ENCODE measurements at regions of chr15 and their contacts with region 1.

Region 1: GRCh38 chr15:72783563-72784237 is at the start of gene ADPGK:
- DNase-seq: peak; percentile 93
- ATAC-seq: peak; percentile 82
- H3K4me3 Mint-ChIP-seq: peak within 1 kb of the TSS; percentile 93
- H3K27ac Mint-ChIP-seq: peak within 1 kb of the TSS; percentile 94
- H3K4me1 Mint-ChIP-seq: peaks cover 78% of the 10 kb centered on the region
- H3K27me3 Mint-ChIP-seq: no peaks in the 10 kb centered on the region
- total RNA-seq, gene ADPGK: 67.8 to 76.5 TPM

Region 2: GRCh38 chr15:72793766-72794660 is 10.3 kb after region 1 on chr15:
- CTCF ChIA-PET with region 1: interaction called, 21 read pairs
- DNase-seq: no peak
- ATAC-seq: no peak
- H3K4me3 Mint-ChIP-seq: no peak overlapping the region
- H3K27ac Mint-ChIP-seq: no peak overlapping the region
- H3K4me1 Mint-ChIP-seq: peaks cover 31% of the 10 kb centered on the region
- H3K27me3 Mint-ChIP-seq: peaks cover 7% of the 10 kb centered on the region

Region 3: DNA sequence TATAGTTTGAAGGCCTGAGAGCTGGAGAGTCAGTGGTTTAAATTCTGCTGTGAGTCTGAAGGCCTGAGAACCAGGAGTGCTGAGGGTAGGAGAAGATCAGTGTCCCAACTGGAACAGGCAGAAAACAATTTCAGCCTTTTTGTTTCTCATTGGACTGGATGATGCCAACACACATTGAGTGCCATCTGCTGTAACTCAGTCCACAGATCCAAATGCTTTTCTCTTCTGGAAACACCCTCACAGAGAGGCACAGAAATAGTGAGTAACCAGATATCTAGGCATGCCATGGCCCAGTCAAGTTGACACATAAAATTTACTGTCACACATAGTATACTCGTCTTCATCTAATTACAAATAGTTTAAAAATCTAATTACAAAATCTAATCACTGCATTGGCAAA is 369.3 kb after region 1 on chr15:
- CTCF ChIA-PET with region 1: no interaction called
- DNase-seq: no peak
- ATAC-seq: no peak
- H3K4me3 Mint-ChIP-seq: no peak overlapping the region
- H3K27ac Mint-ChIP-seq: no peak overlapping the region
- H3K4me1 Mint-ChIP-seq: peaks cover 7% of the 10 kb centered on the region
- H3K27me3 Mint-ChIP-seq: peaks cover 2% of the 10 kb centered on the region

Measured in activated CD8-positive, alpha-beta memory T cell treated with anti-CD3 and anti-CD28 coated beads, Interleukin-2, amount 10 ng/mL, durations not matched to agents 7 days and 5 days (primary cell).